Astrocyte of the cerebellum (primary cell): ENCODE measurements at regions of chr4 and their contacts with region 1.

Region 1: DNA sequence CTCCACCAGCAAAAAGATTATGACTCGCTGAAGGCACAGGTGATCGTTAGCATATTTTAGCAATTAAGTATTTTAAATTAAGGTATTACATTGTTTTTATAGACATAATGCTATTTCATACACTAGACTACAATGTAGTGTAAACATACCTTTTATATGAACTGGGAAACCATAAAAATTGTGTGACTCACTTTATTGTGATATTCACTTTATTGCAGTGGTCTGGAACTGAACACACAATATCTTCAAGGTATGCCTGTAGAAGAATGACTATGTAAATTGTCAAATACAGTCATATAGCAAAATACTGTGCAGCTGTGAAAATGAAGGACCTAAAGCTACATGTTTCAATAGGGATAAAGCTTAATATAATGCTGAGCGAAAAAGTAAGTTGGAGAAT is 26.6 kb upstream of the MAML3 start:
- DNase-seq: no peak
- H3K4me3 ChIP-seq: no peak overlapping the region
- CTCF ChIP-seq: no peak

Region 2: GRCh38 chr4:140103676-140104075 is 76.9 kb before region 1 on chr4:
- in situ Hi-C with region 1: no loop called
- DNase-seq: peak; percentile 33
- H3K4me3 ChIP-seq: no peak overlapping the region
- CTCF ChIP-seq: no peak

Region 3: GRCh38 chr4:140135529-140136088 is 45.0 kb before region 1 on chr4:
- in situ Hi-C with region 1: no loop called
- DNase-seq: no peak
- H3K4me3 ChIP-seq: no peak overlapping the region
- CTCF ChIP-seq: no peak

Region 4: GRCh38 chr4:140237606-140237986 is 57.0 kb after region 1 on chr4:
- in situ Hi-C with region 1: loop called (anchors 5 kb)
- DNase-seq: peak; percentile 89
- H3K4me3 ChIP-seq: no peak overlapping the region
- CTCF ChIP-seq: no peak